A549 (cell line): ENCODE measurements at regions of chr7 and their contacts with region 1.

Region 1: GRCh38 chr7:31122649-31123058 is 70.5 kb downstream of the ADCYAP1R1 start:
- DNase-seq: peak; percentile 46 to 76
- ATAC-seq: peak; percentile 74 to 89; a peak in 5 of 6 replicates
- H3K4me3 ChIP-seq: no peak overlapping the region
- H3K27ac ChIP-seq: no peak overlapping the region
- H3K4me1 ChIP-seq: no peaks in the 10 kb centered on the region
- CTCF ChIP-seq: peak; percentile 90
- EP300 ChIP-seq: no peak
- POLR2A ChIP-seq: no peak
- RAD21 ChIP-seq: peak; percentile 86 to 87

Region 2: GRCh38 chr7:30791114-30791779 is 331.4 kb before region 1 on chr7:
- CTCF ChIA-PET with region 1: interaction called, 13 read pairs
- POLR2A ChIA-PET with region 1: no interaction called
- DNase-seq: no peak
- ATAC-seq: no peak
- H3K4me3 ChIP-seq: no peak overlapping the region
- H3K27ac ChIP-seq: no peak overlapping the region
- H3K4me1 ChIP-seq: peaks cover 9% of the 10 kb centered on the region
- CTCF ChIP-seq: no peak
- EP300 ChIP-seq: no peak
- POLR2A ChIP-seq: no peak
- RAD21 ChIP-seq: no peak

Region 3: DNA sequence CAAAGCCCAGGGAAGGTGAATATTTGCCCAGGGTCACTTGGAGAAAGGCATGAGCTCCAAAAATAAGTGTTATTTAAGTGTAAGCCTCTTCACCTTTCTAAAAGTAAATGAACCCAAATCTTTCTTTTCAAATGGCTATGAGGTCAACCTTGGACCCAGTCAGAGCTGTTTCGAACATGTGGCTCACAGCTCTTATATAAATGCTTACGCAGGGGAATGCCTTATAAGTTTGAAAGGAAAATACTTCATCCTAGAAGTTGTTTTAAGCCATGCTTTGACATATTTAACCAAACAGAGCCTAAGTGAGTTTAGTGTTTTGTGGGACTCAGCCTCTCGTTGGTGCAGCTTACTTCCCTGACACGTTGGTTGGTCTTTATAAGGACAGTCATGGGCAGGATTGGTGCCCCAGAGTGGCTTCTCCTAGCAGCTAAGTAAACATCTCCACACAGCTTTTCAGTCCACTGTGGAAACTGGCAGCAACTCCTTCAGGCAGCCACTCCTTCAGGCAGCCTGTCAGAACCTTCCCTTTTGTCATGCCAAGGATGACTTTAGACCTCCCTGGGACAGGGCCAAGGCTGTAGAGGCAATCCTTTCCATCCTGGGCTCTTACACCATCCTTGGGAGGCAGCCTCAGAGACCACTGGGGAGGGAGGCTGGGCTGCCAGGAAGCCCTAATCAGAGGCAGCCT is 307.8 kb before region 1 on chr7:
- CTCF ChIA-PET with region 1: interaction called, 10 read pairs
- POLR2A ChIA-PET with region 1: no interaction called
- DNase-seq: no peak
- ATAC-seq: no peak
- H3K4me3 ChIP-seq: no peak overlapping the region
- H3K27ac ChIP-seq: no peak overlapping the region
- H3K4me1 ChIP-seq: no peaks in the 10 kb centered on the region
- CTCF ChIP-seq: no peak
- EP300 ChIP-seq: no peak
- POLR2A ChIP-seq: no peak
- RAD21 ChIP-seq: no peak

Region 4: DNA sequence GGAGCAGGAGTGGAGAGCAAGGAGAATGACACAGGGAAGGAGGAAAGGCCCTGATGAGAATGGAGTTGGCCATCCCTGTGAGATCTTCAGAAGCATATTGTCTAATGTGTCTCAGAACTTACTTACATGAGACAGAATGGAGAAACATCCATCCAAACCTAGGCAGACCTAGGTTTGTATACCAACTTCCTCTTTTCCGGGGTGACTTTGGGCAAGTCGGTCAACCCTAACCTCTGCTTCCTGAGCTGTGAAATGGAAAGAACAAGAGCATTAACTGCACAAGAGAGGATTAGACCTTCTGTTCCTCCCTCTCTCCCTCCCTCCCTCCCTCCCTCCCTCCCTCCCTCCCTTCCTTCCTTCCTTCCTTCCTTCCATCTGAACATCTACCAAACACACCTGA is 154.4 kb before region 1 on chr7:
- CTCF ChIA-PET with region 1: interaction called, 16 read pairs
- POLR2A ChIA-PET with region 1: no interaction called
- DNase-seq: no peak
- ATAC-seq: no peak
- H3K4me3 ChIP-seq: no peak overlapping the region
- H3K27ac ChIP-seq: no peak overlapping the region
- H3K4me1 ChIP-seq: no peaks in the 10 kb centered on the region
- CTCF ChIP-seq: no peak
- EP300 ChIP-seq: no peak
- POLR2A ChIP-seq: no peak
- RAD21 ChIP-seq: no peak

Region 5: GRCh38 chr7:30983042-30983913 is 139.4 kb before region 1 on chr7:
- CTCF ChIA-PET with region 1: interaction called, 319 read pairs
- POLR2A ChIA-PET with region 1: interaction called, 4 read pairs
- DNase-seq: peak; percentile 75 to 77
- ATAC-seq: peak; percentile 90 to 97
- H3K4me3 ChIP-seq: no peak overlapping the region
- H3K27ac ChIP-seq: no peak overlapping the region
- H3K4me1 ChIP-seq: peaks cover 3% of the 10 kb centered on the region; the same call in 2 of the 3 replicates
- CTCF ChIP-seq: peak; percentile 87
- EP300 ChIP-seq: no peak
- POLR2A ChIP-seq: no peak
- RAD21 ChIP-seq: peak; percentile 90

Region 6: DNA sequence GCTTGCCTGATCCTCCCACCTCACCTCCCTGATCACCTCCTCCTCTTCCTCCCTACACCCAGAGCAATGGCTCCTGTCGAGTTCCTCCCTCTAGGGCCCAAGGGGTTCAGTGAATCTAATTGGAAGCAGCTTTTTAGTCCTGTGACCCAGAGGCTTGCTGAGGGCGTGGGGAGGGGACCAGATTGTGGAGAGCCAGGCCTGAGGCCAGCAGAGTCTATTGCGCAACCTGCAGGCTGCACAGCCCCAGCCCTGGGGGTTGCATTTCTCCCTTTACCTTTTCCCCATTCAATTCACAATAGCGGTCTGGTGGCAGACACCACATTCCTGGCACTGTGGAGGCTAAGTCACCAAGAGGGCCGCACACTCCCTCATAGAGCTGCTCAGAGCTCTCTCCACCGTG is 126.4 kb before region 1 on chr7:
- CTCF ChIA-PET with region 1: interaction called, 55 read pairs
- POLR2A ChIA-PET with region 1: no interaction called
- DNase-seq: no peak
- ATAC-seq: no peak
- H3K4me3 ChIP-seq: no peak overlapping the region
- H3K27ac ChIP-seq: no peak overlapping the region
- H3K4me1 ChIP-seq: no peaks in the 10 kb centered on the region
- CTCF ChIP-seq: no peak
- EP300 ChIP-seq: no peak
- POLR2A ChIP-seq: no peak
- RAD21 ChIP-seq: no peak

Region 7: DNA sequence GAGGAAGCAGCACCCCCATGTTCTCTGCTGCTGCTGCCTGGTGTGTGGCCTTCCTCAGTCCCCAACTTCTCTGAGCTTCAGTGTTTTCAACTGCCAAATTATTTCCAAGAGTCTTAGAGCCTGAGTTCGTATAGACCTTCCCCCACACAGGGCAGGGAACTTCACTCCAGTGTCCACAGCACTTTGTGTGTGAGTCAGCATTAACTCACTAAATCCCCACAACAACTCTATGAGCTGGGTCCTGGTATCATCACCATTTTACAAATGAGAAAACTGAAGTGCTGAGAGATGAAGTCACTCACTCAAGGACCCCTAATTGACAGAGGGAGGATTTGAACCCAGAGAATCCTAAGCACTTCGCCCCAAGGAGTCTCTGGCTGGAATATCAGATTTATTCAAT is 22.2 kb before region 1 on chr7:
- CTCF ChIA-PET with region 1: interaction called, 141 read pairs
- POLR2A ChIA-PET with region 1: no interaction called
- DNase-seq: no peak
- ATAC-seq: peak in 1 of 2 experiments; percentile 38; a peak in 2 of 6 replicates
- H3K4me3 ChIP-seq: no peak overlapping the region
- H3K27ac ChIP-seq: no peak overlapping the region
- H3K4me1 ChIP-seq: no peaks in the 10 kb centered on the region
- CTCF ChIP-seq: no peak
- EP300 ChIP-seq: no peak
- POLR2A ChIP-seq: no peak
- RAD21 ChIP-seq: no peak